AG04449 (cell line): ENCODE measurements at regions of chr16 and their contacts with region 1.

Region 1: GRCh38 chr16:2980227-2981086 is at the start of gene PKMYT1:
- DNase-seq: no peak
- H3K4me3 ChIP-seq: peak within 1 kb of the TSS; percentile 86
- CTCF ChIP-seq: no peak

Region 2: DNA sequence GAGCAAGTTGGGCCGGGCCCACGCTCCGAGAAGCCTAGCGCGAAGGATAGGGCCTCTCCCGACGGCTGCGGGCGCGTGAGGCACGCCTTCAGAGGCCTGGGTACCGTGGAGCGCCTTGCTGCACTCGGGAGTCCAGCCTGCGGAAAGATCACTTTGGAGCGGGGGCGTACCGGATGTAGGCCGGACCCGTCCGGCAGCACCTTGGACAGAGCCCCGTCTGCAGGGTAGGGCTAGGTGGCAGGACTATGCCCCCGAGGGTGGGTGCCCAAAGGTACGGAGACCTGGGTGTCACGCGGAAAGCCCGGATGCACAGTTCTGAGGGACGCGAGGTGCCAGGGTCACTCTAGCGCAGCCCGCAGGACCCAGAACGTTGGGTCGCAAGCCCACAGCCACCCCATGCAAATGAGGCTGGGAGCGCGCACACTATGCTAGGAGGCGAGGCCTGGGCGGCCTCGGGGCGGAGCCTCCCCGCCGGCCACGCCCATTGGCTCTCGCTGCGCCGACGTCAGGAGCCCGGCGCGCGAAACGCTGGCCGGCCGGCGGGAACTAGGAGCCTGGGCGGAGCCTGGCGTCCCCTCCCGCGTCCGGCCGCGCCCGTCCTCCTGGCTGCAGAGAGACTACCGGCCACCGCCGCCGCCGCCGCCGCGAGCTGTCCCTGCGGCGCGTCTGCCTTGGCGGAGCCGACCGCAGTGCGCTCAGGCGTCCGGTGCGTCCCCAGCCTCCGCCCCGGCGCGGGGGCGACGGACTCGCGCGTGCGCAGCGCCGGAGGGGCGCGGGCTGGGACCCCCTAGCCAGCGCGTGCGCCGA is 11.5 kb before region 1 on chr16 and contains the start of gene PAQR4:
- CTCF ChIA-PET with region 1: interaction called, 10 read pairs
- POLR2A ChIA-PET with region 1: no interaction called
- DNase-seq: no peak
- H3K4me3 ChIP-seq: peak within 1 kb of the TSS; percentile 61
- CTCF ChIP-seq: no peak